Dendritic cell treated with granulocyte-macrophage colony-stimulating factor and Interleukin-4, amounts not matched to agents 40 ng/mL and 50 ng/mL, for 4 days (primary cell): ENCODE measurements at regions of chr6 and their contacts with region 1.

Region 1: GRCh38 chr6:32785781-32786533 is 22.6 kb upstream of the HLA-DQB2 start:
- H3K4me3 Mint-ChIP-seq: no peak overlapping the region
- H3K27ac Mint-ChIP-seq: peak overlapping the region; percentile 87
- H3K4me1 Mint-ChIP-seq: peaks cover 31% of the 10 kb centered on the region
- H3K27me3 Mint-ChIP-seq: peaks cover 4% of the 10 kb centered on the region

Region 2: DNA sequence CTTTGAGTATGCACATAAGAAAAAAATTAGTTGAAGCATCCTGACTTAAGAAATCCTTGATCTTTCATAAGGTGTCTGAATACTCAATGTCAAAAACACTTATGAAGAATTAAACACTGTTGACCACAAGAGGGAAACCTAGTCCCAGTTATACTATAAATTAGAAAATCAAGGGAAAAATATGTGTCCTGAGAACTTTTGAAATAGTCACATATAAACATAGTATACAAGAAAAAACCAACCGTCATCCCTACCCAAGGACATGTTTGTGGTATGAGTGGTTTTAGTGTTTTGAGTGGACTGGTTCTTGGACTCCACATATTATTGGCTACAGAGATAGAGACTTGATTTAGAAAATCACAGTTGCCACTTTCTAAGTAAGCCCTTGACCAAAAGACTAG is 353.9 kb before region 1 on chr6:
- intact Hi-C with region 1: loop called (anchors 5 kb)
- H3K4me3 Mint-ChIP-seq: no peak overlapping the region
- H3K27ac Mint-ChIP-seq: no peak overlapping the region
- H3K4me1 Mint-ChIP-seq: peaks cover 30% of the 10 kb centered on the region
- H3K27me3 Mint-ChIP-seq: no peaks in the 10 kb centered on the region

Region 3: DNA sequence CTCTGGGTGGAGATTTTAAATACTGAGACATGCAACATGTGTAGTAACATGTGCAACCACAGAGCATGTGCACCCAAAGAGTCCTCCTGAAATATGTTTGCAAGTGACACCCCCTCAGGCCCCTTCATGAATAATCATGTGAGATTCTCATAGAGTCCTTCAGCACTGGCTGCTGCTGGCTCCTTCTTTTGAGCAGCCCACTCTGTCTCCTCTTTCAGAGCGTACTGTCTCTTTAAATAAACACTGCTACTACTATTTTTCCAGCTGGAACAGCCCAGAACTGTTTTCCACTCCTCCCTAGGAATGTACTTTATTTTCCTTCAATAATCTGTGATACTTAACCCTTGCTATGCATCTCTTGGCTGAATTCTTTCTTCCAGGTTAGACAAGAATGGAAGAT is 297.9 kb before region 1 on chr6:
- intact Hi-C with region 1: no loop called
- H3K4me3 Mint-ChIP-seq: no peak overlapping the region
- H3K27ac Mint-ChIP-seq: no peak overlapping the region
- H3K4me1 Mint-ChIP-seq: peaks cover 12% of the 10 kb centered on the region
- H3K27me3 Mint-ChIP-seq: no peaks in the 10 kb centered on the region

Region 4: DNA sequence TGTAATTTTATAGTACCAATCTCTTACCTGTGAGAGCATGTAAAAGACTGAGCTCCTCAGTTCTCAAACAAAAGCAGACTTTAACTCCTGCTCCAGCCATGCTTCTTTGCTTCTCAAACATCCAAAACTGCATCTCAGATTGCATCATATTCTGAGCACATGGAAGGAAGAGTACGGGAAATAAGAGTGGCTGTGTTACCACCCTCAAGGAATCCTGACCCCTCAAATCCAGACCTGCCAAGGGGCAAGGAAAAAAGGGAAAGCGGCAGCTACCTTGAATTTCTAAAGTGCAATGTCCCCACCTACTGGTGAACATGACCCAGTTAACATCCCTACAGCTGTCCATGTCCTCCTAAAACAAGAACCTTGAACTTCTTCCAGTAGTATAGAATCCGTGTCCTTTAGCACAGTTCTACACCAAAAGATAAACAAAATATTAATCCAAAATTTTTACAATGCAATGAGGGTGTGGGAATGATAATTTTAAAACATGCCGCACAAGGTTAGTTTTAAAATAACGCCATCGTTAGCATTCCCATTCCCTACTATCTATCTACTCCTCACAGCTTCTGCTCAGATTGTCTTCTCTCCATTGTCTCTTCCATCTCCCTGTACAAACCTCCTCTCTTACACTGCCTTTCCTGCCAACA is 85.4 kb before region 1 on chr6:
- intact Hi-C with region 1: loop called (anchors 5 kb)
- H3K4me3 Mint-ChIP-seq: no peak overlapping the region
- H3K27ac Mint-ChIP-seq: peak overlapping the region; percentile 5
- H3K4me1 Mint-ChIP-seq: peaks cover 25% of the 10 kb centered on the region
- H3K27me3 Mint-ChIP-seq: peaks cover 39% of the 10 kb centered on the region

Region 5: DNA sequence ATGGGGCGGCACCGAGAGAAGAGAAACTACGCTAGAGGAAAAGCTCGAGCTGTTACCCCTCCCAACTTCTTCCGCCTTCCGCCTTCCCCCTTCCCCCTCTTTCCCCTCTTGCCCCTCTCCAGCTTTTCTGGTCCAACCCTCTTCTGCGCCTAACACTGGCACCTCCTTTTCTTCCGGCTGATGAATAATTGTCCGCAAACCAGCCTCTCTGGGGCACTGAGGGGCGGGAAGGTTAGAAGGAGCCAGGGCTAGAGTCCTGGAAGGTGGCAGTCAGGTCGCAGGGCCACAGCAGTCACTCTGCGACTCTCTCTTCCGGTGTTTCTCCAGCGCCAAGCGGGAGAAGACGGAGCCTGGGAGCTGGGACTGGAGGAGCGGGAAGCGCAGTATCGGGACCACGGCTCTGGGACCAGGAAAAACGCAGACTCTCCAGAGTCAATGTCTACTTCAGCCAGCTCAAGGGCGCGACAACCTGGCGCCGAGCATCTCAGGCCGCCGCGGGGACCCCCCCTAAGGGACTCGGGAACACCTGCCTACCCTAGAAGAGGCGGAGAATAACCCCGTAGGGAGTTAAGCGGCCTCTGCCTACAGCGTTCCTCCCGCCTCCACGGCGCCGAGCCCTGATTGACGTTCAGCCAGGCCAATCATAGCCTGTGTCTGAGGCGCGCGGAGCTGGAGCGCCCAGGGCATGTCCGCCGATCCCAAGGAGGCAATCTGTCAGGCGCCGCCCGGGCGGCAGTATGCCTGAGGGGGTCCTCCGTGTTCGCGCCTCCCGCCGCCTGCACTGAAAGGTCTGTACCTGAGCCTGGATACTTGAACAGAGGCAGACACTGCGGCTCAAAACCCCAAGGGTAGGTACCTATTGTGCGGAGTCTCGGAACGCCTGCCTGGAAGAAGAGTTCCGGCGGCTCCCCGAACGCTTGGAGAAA is 108.4 kb after region 1 on chr6:
- intact Hi-C with region 1: no loop called
- H3K4me3 Mint-ChIP-seq: peak overlapping the region; percentile 99
- H3K27ac Mint-ChIP-seq: peak overlapping the region; percentile 91
- H3K4me1 Mint-ChIP-seq: peaks cover 45% of the 10 kb centered on the region
- H3K27me3 Mint-ChIP-seq: no peaks in the 10 kb centered on the region